HepG2 (cell line): ENCODE measurements at regions of chr6 and their contacts with region 1.

Region 1: DNA sequence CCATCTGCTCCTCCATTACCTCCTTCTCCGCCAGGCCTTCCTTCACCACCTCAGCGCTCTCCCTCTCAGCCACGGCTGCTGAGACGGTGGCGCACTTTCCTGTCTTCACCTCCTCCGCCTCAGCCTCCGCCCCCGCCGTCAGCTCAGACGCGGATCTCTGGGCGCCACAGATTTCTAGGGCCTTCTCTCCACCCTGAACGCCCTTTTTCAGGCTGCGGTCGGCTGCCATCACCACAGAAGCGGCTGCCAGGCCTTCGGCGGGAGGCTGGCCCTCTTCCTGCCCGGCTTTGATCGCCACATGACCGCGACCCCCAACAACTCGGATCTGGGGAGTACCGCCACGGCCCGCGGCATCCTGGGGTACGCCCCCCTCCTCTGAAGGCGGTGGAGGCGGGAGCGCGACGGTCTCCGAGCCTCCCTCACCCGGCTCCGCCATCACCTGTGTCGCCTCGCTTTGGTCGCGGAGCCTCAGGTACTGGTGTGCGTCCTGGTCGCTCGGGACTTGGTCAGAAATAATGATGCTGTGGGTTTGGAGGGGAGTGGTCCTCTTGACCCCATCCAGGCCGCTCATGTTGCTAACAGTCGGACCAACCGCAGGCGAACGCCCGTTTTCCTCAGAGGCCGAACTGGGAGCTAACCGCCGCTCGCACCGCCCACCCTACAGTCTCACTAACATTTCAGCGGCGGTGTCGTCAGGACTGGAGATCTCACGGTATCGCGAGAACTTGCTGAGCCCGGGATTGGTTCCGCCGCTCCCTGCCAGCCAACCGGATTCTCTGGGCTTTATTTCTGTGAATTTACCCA is at the start of gene TSPYL1:
- DNase-seq: peak; percentile 97
- ATAC-seq: peak; percentile 96
- H3K4me3 ChIP-seq: peak within 1 kb of the TSS; percentile 82 to 97 (median 87)
- H3K27ac ChIP-seq: peak within 1 kb of the TSS; percentile 87
- H3K4me1 ChIP-seq: peaks cover 49% of the 10 kb centered on the region
- H3K27me3 ChIP-seq: no peaks in the 10 kb centered on the region; a peak in 1 of 5 replicates
- CTCF ChIP-seq: peak; percentile 59
- EP300 ChIP-seq: peak in 1 of 2 experiments; percentile 73; a peak in 2 of 4 replicates
- POLR2A ChIP-seq: peak; percentile 95 to 96
- RAD21 ChIP-seq: peak; percentile 28; the same call in 1 of the 2 replicates
- total RNA-seq, gene TSPYL1: 93.0 and 102 TPM in 2 replicates

Region 2: GRCh38 chr6:116253505-116254296 is 25.8 kb before region 1 on chr6 and contains the start of gene TSPYL4:
- CTCF ChIA-PET with region 1: no interaction called
- POLR2A ChIA-PET with region 1: interaction called, 24 read pairs
- in situ Hi-C with region 1: no loop called
- intact Hi-C with region 1: loop called (anchors 2 kb)
- DNase-seq: peak; percentile 95
- ATAC-seq: peak; percentile 95
- H3K4me3 ChIP-seq: peak within 1 kb of the TSS; percentile 86 to 92 (median 89)
- H3K27ac ChIP-seq: peak within 1 kb of the TSS; percentile 78
- H3K4me1 ChIP-seq: peaks cover 54% of the 10 kb centered on the region
- H3K27me3 ChIP-seq: no peaks in the 10 kb centered on the region
- CTCF ChIP-seq: peak; percentile 3; the same call in 1 of the 2 replicates
- EP300 ChIP-seq: no peak
- POLR2A ChIP-seq: peak; percentile 73 to 83; a peak in 3 of 4 replicates
- RAD21 ChIP-seq: no peak
- total RNA-seq, gene TSPYL4: 19.7 and 24.0 TPM in 2 replicates

Region 3: GRCh38 chr6:116268589-116269293 is 10.7 kb before region 1 on chr6:
- CTCF ChIA-PET with region 1: interaction called, 3 read pairs
- POLR2A ChIA-PET with region 1: interaction called, 35 read pairs
- in situ Hi-C with region 1: no loop called
- intact Hi-C with region 1: loop called (anchors 1 kb)
- DNase-seq: peak; percentile 88
- ATAC-seq: peak; percentile 93
- H3K4me3 ChIP-seq: no peak overlapping the region
- H3K27ac ChIP-seq: no peak overlapping the region
- H3K4me1 ChIP-seq: 0 out of 2 replicates have a peak, but pooled peaks cover 5% of the 10 kb centered on the region
- H3K27me3 ChIP-seq: no peaks in the 10 kb centered on the region
- CTCF ChIP-seq: peak; percentile 86
- EP300 ChIP-seq: no peak
- POLR2A ChIP-seq: no peak
- RAD21 ChIP-seq: peak; percentile 73

Region 4: DNA sequence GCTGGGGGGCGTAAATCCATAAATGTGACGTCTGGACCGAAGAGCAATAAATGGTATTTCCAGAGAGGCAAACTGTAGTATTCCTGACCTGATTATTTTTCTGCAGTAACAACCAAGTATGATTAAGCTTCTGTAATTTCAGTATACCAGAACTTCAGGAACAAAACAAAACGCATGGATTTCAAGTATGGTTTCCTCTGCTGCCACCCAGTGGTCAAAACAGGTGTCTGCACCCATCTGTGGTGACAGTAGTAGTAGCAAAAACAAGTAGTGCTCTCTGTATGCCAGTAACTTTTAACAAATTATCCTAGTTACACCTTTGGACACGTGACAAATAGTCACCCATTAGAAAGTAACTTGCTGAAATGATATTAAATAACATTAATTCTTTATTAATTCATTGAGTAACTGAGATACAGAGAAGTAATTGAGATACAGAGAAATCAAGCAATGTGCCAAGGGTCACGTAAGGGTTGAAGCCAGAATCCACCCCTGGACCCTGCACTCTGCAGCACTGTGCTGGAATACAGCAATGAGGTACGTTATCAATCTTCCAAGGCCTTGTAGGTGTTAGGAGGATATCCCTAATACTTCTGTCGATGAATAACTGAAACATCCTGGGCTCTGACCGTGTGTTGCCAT is 282.0 kb after region 1 on chr6:
- CTCF ChIA-PET with region 1: no interaction called
- POLR2A ChIA-PET with region 1: no interaction called
- in situ Hi-C with region 1: loop called (anchors 10 kb)
- intact Hi-C with region 1: no loop called
- DNase-seq: peak; percentile 70
- ATAC-seq: peak; percentile 78
- H3K4me3 ChIP-seq: peak overlapping the region in 2 of 3 experiments; percentile 13 to 28; a peak in 2 of 6 replicates
- H3K27ac ChIP-seq: no peak overlapping the region
- H3K4me1 ChIP-seq: peaks cover 31% of the 10 kb centered on the region
- H3K27me3 ChIP-seq: no peaks in the 10 kb centered on the region; a peak in 3 of 5 replicates
- CTCF ChIP-seq: peak; percentile 91
- EP300 ChIP-seq: no peak
- POLR2A ChIP-seq: no peak
- RAD21 ChIP-seq: peak; percentile 78

Region 5: GRCh38 chr6:116570856-116571682 is 291.6 kb after region 1 on chr6 and contains the start of gene RWDD1:
- CTCF ChIA-PET with region 1: no interaction called
- POLR2A ChIA-PET with region 1: interaction called, 15 read pairs
- in situ Hi-C with region 1: loop called (anchors 10 kb)
- intact Hi-C with region 1: loop called (anchors 5 kb)
- DNase-seq: peak; percentile 99
- ATAC-seq: peak; percentile 94
- H3K4me3 ChIP-seq: peak within 1 kb of the TSS; percentile 89 to 96 (median 92)
- H3K27ac ChIP-seq: peak within 1 kb of the TSS; percentile 90
- H3K4me1 ChIP-seq: peaks cover 35% of the 10 kb centered on the region
- H3K27me3 ChIP-seq: no peaks in the 10 kb centered on the region; a peak in 1 of 5 replicates
- CTCF ChIP-seq: no peak; the same call in 1 of the 2 replicates
- EP300 ChIP-seq: peak; percentile 35 to 43; a peak in 3 of 4 replicates
- POLR2A ChIP-seq: peak; percentile 91 to 94
- RAD21 ChIP-seq: peak; percentile 39
- total RNA-seq, gene RWDD1: 67.1 and 90.5 TPM in 2 replicates

Region 6: DNA sequence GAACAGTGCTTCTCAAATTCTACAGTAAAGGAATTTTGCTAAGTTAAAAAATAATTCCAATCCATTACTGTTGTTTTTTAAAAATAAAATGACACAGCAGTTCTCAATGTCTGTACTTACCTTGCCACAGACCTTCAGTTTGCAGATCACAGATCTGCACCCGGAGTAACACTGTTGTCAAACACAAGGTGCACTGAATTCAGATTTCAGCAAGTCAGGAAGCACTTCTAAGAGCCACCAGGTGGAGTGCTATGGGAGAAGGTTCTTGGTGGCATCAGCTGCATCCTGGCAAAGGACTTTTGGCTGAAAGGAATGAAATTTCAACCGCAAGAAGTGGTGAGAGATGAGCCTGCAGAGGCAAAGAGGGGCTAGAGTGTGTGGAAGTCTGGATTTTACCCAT is 354.2 kb after region 1 on chr6:
- CTCF ChIA-PET with region 1: no interaction called
- POLR2A ChIA-PET with region 1: no interaction called
- in situ Hi-C with region 1: no loop called
- intact Hi-C with region 1: loop called (anchors 5 kb)
- DNase-seq: peak; percentile 78
- ATAC-seq: peak; percentile 64
- H3K4me3 ChIP-seq: no peak overlapping the region
- H3K27ac ChIP-seq: peak overlapping the region; percentile 83
- H3K4me1 ChIP-seq: peaks cover 51% of the 10 kb centered on the region
- H3K27me3 ChIP-seq: no peaks in the 10 kb centered on the region
- CTCF ChIP-seq: peak; percentile 78
- EP300 ChIP-seq: no peak
- POLR2A ChIP-seq: no peak
- RAD21 ChIP-seq: no peak

Region 7: DNA sequence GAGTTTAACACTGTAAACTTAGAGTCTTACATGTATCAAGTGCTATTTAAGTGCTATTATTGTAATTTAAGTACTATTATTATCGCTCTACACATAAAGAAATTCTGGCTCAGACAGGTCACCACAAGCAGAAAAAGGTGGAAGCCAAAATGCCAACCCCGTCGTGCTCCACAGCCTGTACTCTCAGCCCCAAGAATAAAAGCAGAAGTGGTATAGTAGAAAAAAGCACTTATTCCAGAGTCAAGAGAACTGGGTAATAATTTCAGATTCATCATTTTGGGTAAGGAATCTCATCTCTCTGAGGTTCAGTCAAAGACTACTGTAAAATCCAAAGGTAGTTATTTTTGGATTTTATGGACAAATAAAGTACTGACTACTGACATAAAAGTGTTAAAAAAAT is 388.2 kb after region 1 on chr6:
- CTCF ChIA-PET with region 1: no interaction called
- POLR2A ChIA-PET with region 1: no interaction called
- in situ Hi-C with region 1: loop called (anchors 25 kb)
- intact Hi-C with region 1: no loop called
- DNase-seq: no peak
- ATAC-seq: no peak
- H3K4me3 ChIP-seq: peak overlapping the region; percentile 91 to 100 (median 94)
- H3K27ac ChIP-seq: peak overlapping the region; percentile 66
- H3K4me1 ChIP-seq: peaks cover 41% of the 10 kb centered on the region
- H3K27me3 ChIP-seq: peaks cover 2 to 13% of the 10 kb centered on the region in 2 experiments; a peak in 3 of 5 replicates
- CTCF ChIP-seq: no peak
- EP300 ChIP-seq: no peak
- POLR2A ChIP-seq: no peak
- RAD21 ChIP-seq: no peak

Region 8: DNA sequence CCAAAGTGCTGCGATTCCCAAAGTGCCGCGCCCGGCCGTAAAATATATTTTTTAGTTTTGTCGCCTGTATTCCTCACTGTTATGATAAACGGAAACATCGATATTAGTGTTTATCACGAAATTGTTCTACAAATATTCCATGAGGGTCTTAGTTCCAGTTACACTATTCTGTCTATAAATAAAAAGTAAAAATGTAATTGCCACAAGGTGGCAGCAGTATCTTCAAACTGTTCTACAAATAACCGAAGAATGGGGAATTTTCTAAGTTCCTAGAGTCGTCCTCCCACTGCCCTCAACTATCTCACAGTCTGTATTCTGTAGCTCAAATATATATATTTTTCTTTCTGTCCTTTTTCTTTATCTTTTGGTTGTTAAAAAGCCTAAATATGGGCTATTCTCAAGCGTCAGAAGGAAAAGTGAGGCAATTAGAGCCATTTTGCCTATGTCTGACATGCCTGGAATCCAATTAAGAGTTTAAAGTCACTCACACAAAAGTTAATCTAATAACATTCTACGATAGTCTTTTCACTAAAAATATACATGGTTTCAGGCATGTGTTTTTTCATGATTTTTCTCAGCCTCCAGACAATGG is 500.2 kb after region 1 on chr6:
- CTCF ChIA-PET with region 1: no interaction called
- POLR2A ChIA-PET with region 1: no interaction called
- in situ Hi-C with region 1: no loop called
- intact Hi-C with region 1: no loop called
- DNase-seq: peak; percentile 58
- ATAC-seq: peak; percentile 86
- H3K4me3 ChIP-seq: peak overlapping the region in 1 of 3 experiments; percentile 1; a peak in 1 of 6 replicates
- H3K27ac ChIP-seq: no peak overlapping the region
- H3K4me1 ChIP-seq: no peaks in the 10 kb centered on the region
- H3K27me3 ChIP-seq: no peaks in the 10 kb centered on the region; a peak in 1 of 5 replicates
- CTCF ChIP-seq: peak; percentile 72
- EP300 ChIP-seq: no peak
- POLR2A ChIP-seq: no peak
- RAD21 ChIP-seq: no peak